Activated CD4-positive, alpha-beta memory T cell treated with anti-CD3 and anti-CD28 coated beads, Interleukin-2, amount 10 ng/mL, durations not matched to agents 7 days and 5 days (primary cell): ENCODE measurements at regions of chr14 and their contacts with region 1.

Region 1: DNA sequence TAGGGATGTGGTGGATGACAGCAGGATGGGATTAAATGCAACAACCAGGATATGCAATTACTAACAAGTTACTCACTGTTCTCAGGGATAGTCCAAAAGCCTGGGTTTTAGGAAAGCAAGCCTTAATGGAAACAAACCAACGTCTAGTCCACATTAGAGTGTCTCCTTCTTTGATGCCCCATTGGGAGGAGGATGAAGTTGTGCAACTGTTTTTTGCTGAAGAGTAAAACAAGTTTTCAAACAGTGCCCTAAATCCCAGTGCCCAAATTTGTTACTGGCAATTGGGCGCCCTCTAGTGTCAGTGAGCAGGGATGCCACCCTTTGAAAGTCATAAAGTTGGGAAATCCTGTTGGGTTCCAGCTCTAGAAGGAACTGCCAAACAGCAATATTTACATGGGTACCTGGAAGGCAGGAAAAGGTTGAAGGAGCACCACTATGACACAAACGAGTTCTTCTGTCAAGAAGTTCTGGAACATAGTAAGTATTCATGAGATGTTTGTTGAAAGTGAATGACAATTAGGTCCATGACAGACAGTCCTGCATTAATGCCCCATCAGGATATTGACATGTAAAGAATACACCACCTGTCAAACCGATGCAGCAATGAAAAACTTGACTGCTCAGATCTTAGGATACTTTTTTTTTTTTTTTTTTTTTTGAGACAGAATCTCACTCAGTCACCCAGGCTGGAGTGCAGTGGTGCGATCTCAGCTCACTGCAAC is 11.1 kb upstream of the DPF3 start:
- DNase-seq: peak; percentile 75
- H3K4me3 Mint-ChIP-seq: no peak overlapping the region
- H3K27ac Mint-ChIP-seq: no peak overlapping the region
- H3K4me1 Mint-ChIP-seq: peaks cover 31% of the 10 kb centered on the region
- H3K27me3 Mint-ChIP-seq: peaks cover 25% of the 10 kb centered on the region

Region 2: DNA sequence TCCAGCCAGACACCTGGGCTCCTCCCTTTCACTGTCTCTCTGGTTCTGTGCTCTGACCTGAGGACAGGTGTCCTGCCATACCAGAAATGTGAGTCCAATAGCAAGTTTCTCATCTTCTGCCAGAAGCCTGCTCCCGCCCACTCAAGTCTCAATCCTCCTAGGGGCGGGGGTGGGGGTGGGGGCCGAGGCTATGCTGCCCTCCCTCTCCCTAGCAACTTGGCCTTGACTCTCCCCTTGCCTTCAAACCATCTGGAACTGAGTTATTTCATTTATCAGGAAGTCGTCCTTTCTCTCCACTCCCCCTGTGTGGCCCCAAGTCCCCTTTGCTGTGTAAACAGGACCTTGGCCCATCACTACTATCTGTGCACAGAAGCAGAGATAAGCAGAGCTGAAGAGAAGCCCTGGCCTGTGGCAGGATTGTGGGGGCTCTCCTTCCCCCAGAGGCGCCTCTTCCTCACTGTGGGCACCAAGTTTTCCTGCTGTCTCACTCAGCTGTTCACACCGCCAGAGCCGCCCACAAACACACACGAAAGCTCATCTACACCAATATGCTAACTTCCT is 128.2 kb before region 1 on chr14:
- CTCF ChIA-PET with region 1: no interaction called
- POLR2A ChIA-PET with region 1: no interaction called
- DNase-seq: no peak
- H3K4me3 Mint-ChIP-seq: no peak overlapping the region
- H3K27ac Mint-ChIP-seq: no peak overlapping the region
- H3K4me1 Mint-ChIP-seq: peaks cover 4% of the 10 kb centered on the region
- H3K27me3 Mint-ChIP-seq: peaks cover 8% of the 10 kb centered on the region

Region 3: GRCh38 chr14:72893636-72894321 is 11.2 kb before region 1 on chr14 and contains the start of gene DPF3:
- CTCF ChIA-PET with region 1: interaction called, 19 read pairs
- POLR2A ChIA-PET with region 1: interaction called, 14 read pairs
- DNase-seq: peak; percentile 98
- H3K4me3 Mint-ChIP-seq: peak within 1 kb of the TSS; percentile 92
- H3K27ac Mint-ChIP-seq: peak within 1 kb of the TSS; percentile 41
- H3K4me1 Mint-ChIP-seq: peaks cover 35% of the 10 kb centered on the region
- H3K27me3 Mint-ChIP-seq: peaks cover 61% of the 10 kb centered on the region
- total RNA-seq, gene DPF3: 14.9 to 15.4 TPM

Region 4: GRCh38 chr14:72948481-72949138 is 43.6 kb after region 1 on chr14:
- CTCF ChIA-PET with region 1: interaction called, 32 read pairs
- POLR2A ChIA-PET with region 1: interaction called, 5 read pairs
- DNase-seq: peak; percentile 75
- H3K4me3 Mint-ChIP-seq: no peak overlapping the region
- H3K27ac Mint-ChIP-seq: no peak overlapping the region
- H3K4me1 Mint-ChIP-seq: peaks cover 19% of the 10 kb centered on the region
- H3K27me3 Mint-ChIP-seq: no peaks in the 10 kb centered on the region